Left ventricle myocardium superior (tissue), 1 donor: ENCODE measurements at regions of chr1 and their contacts with region 1.

Region 1: GRCh38 chr1:243343970-243344937 is 88.4 kb downstream of the SDCCAG8 start:
- DNase-seq: no peak
- ATAC-seq: no peak

Region 2: GRCh38 chr1:244272471-244273261 is 928.4 kb after region 1 on chr1:
- intact Hi-C with region 1: loop called (anchors 5 kb)
- DNase-seq: peak; percentile 51
- ATAC-seq: peak; percentile 90